ENCODE measurements at regions of chr1 and their contacts with region 1.

Region 1: DNA sequence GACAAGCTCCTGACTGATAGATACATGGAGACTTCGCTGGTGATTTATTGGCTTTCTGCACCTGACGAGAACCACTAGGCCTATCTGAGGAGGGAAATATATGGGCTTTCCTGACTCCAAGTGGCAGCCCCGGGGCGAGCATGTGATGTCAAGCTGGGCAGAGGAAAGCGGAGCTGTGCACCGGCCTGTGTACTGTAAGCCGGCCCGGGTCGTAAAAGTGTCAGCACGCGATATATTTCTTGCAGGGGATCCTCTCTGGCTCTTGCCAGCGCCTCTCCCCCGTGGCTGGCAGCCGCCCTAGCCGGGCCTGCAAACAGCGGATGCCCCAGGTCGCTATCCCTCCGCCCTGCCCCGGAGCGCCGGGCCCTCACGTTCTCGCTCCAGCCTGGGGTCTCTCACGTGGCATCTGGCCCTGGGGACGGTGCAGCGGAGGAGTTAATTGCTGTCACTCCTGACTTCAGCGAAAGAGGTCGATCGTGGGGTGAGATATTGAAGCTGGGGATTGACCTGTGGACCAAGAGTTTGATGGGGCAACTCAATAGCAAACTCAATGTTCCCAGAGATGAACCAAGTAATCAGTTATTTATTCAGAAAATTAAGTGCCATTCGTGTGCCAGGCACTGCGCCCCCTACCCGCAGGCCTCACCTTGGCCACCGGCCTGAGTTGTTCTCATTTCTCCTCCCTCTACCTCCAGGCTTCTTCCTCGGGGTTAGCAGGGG is 41.0 kb upstream of the HAO2 start:
- DNase-seq: peak in 4 of 5 donors; percentile 8 to 21 (median 10)
- H3K4me3 ChIP-seq: peak overlapping the region in 1 of 2 donors; percentile 45
- H3K4me3 Mint-ChIP-seq: peak overlapping the region; percentile 83 to 91 (median 89)
- H3K27ac ChIP-seq: no peak overlapping the region
- H3K27ac Mint-ChIP-seq: peak overlapping the region in 3 of 7 donors; percentile 30 to 78 (median 47)
- H3K4me1 ChIP-seq: peaks cover 5% of the 10 kb centered on the region
- H3K4me1 Mint-ChIP-seq: peaks cover 8 to 20% (median 16%) of the 10 kb centered on the region in 4 donors
- H3K27me3 ChIP-seq: no peaks in the 10 kb centered on the region
- H3K27me3 Mint-ChIP-seq: peaks cover 1 to 6% of the 10 kb centered on the region in 2 donors

Region 2: GRCh38 chr1:119286587-119287181 is 40.9 kb before region 1 on chr1:
- CTCF ChIA-PET with region 1: no interaction called
- POLR2A ChIA-PET with region 1: no interaction called
- intact Hi-C with region 1: loop called (anchors 1 kb)
- DNase-seq: peak in 3 of 5 donors; percentile 2 to 22 (median 13)
- H3K4me3 ChIP-seq: no peak overlapping the region
- H3K4me3 Mint-ChIP-seq: no peak overlapping the region
- H3K27ac ChIP-seq: no peak overlapping the region
- H3K27ac Mint-ChIP-seq: no peak overlapping the region
- H3K4me1 ChIP-seq: no peaks in the 10 kb centered on the region
- H3K4me1 Mint-ChIP-seq: no peaks in the 10 kb centered on the region
- H3K27me3 ChIP-seq: no peaks in the 10 kb centered on the region
- H3K27me3 Mint-ChIP-seq: peaks cover 9 to 13% of the 10 kb centered on the region in 2 donors